CD8-positive, alpha-beta T cell (primary cell): ENCODE measurements at regions of chr11 and their contacts with region 1.

Region 1: GRCh38 chr11:72793425-72794367 is at the start of gene STARD10:
- DNase-seq: peak; percentile 88 to 97 (median 95)
- ATAC-seq: peak; percentile 92
- H3K4me3 ChIP-seq: peak within 1 kb of the TSS; percentile 62 to 90
- H3K4me3 Mint-ChIP-seq: peak within 1 kb of the TSS; percentile 99
- H3K27ac ChIP-seq: peak within 1 kb of the TSS; percentile 87 to 92
- H3K27ac Mint-ChIP-seq: peak within 1 kb of the TSS; percentile 100
- H3K4me1 ChIP-seq: peaks cover 20% of the 10 kb centered on the region
- H3K4me1 Mint-ChIP-seq: peaks cover 25% of the 10 kb centered on the region
- H3K27me3 ChIP-seq: no peaks in the 10 kb centered on the region
- H3K27me3 Mint-ChIP-seq: no peaks in the 10 kb centered on the region
- CTCF ChIP-seq: peak; percentile 91
- total RNA-seq, gene STARD10: 22.1 to 25.1 TPM

Region 2: GRCh38 chr11:72736452-72737069 is 57.1 kb before region 1 on chr11:
- CTCF ChIA-PET with region 1: interaction called, 16 read pairs
- POLR2A ChIA-PET with region 1: no interaction called
- intact Hi-C with region 1: no loop called
- DNase-seq: peak; percentile 50 to 95 (median 75)
- ATAC-seq: peak; percentile 89
- H3K4me3 ChIP-seq: no peak overlapping the region
- H3K4me3 Mint-ChIP-seq: peak overlapping the region; percentile 47
- H3K27ac ChIP-seq: peak overlapping the region; percentile 60 to 96
- H3K27ac Mint-ChIP-seq: peak overlapping the region; percentile 99
- H3K4me1 ChIP-seq: peaks cover 53% of the 10 kb centered on the region
- H3K4me1 Mint-ChIP-seq: peaks cover 56% of the 10 kb centered on the region
- H3K27me3 ChIP-seq: no peaks in the 10 kb centered on the region
- H3K27me3 Mint-ChIP-seq: no peaks in the 10 kb centered on the region
- CTCF ChIP-seq: no peak

Region 3: GRCh38 chr11:72781313-72782050 is 12.2 kb before region 1 on chr11:
- CTCF ChIA-PET with region 1: interaction called, 16 read pairs
- POLR2A ChIA-PET with region 1: interaction called, 15 read pairs
- intact Hi-C with region 1: loop called (anchors 1 kb)
- DNase-seq: peak; percentile 34 to 87 (median 66)
- ATAC-seq: peak; percentile 86
- H3K4me3 ChIP-seq: peak overlapping the region; percentile 42 to 59
- H3K4me3 Mint-ChIP-seq: peak overlapping the region; percentile 72
- H3K27ac ChIP-seq: no peak overlapping the region
- H3K27ac Mint-ChIP-seq: peak overlapping the region; percentile 50
- H3K4me1 ChIP-seq: peaks cover 16% of the 10 kb centered on the region
- H3K4me1 Mint-ChIP-seq: peaks cover 29% of the 10 kb centered on the region
- H3K27me3 ChIP-seq: no peaks in the 10 kb centered on the region
- H3K27me3 Mint-ChIP-seq: no peaks in the 10 kb centered on the region
- CTCF ChIP-seq: no peak

Region 4: GRCh38 chr11:72821883-72822799 is 28.4 kb after region 1 on chr11:
- CTCF ChIA-PET with region 1: interaction called, 4 read pairs
- POLR2A ChIA-PET with region 1: no interaction called
- intact Hi-C with region 1: loop called in 1 of 2 experiments (anchors 1 kb)
- DNase-seq: peak; percentile 59 to 96 (median 84)
- ATAC-seq: peak; percentile 94
- H3K4me3 ChIP-seq: peak overlapping the region in 1 of 2 experiments; percentile 45
- H3K4me3 Mint-ChIP-seq: peak overlapping the region; percentile 29
- H3K27ac ChIP-seq: peak overlapping the region in 1 of 2 experiments; percentile 61
- H3K27ac Mint-ChIP-seq: peak overlapping the region; percentile 80
- H3K4me1 ChIP-seq: peaks cover 6% of the 10 kb centered on the region
- H3K4me1 Mint-ChIP-seq: peaks cover 10% of the 10 kb centered on the region
- H3K27me3 ChIP-seq: no peaks in the 10 kb centered on the region
- H3K27me3 Mint-ChIP-seq: no peaks in the 10 kb centered on the region
- CTCF ChIP-seq: no peak

Region 5: GRCh38 chr11:73141848-73142286 is 348.2 kb after region 1 on chr11:
- CTCF ChIA-PET with region 1: interaction called, 3 read pairs
- POLR2A ChIA-PET with region 1: no interaction called
- intact Hi-C with region 1: loop called in 1 of 2 experiments (anchors 1 kb)
- DNase-seq: peak in 7 of 9 experiments; percentile 23 to 81 (median 66)
- ATAC-seq: peak; percentile 27
- H3K4me3 ChIP-seq: peak overlapping the region; percentile 97 to 99
- H3K4me3 Mint-ChIP-seq: peak overlapping the region; percentile 98
- H3K27ac ChIP-seq: peak overlapping the region; percentile 83 to 87
- H3K27ac Mint-ChIP-seq: peak overlapping the region; percentile 96
- H3K4me1 ChIP-seq: peaks cover 33% of the 10 kb centered on the region
- H3K4me1 Mint-ChIP-seq: peaks cover 52% of the 10 kb centered on the region
- H3K27me3 ChIP-seq: no peaks in the 10 kb centered on the region
- H3K27me3 Mint-ChIP-seq: no peaks in the 10 kb centered on the region
- CTCF ChIP-seq: no peak

Region 6: GRCh38 chr11:73965076-73965860 is 1171.6 kb after region 1 on chr11:
- CTCF ChIA-PET with region 1: no interaction called
- POLR2A ChIA-PET with region 1: no interaction called
- intact Hi-C with region 1: loop called in 1 of 2 experiments (anchors 10 kb)
- DNase-seq: peak in 2 of 9 experiments; percentile 8 to 14
- ATAC-seq: no peak
- H3K4me3 ChIP-seq: no peak overlapping the region
- H3K4me3 Mint-ChIP-seq: no peak overlapping the region
- H3K27ac ChIP-seq: no peak overlapping the region
- H3K27ac Mint-ChIP-seq: peak overlapping the region; percentile 78
- H3K4me1 ChIP-seq: peaks cover 51% of the 10 kb centered on the region
- H3K4me1 Mint-ChIP-seq: peaks cover 44% of the 10 kb centered on the region
- H3K27me3 ChIP-seq: no peaks in the 10 kb centered on the region
- H3K27me3 Mint-ChIP-seq: no peaks in the 10 kb centered on the region
- CTCF ChIP-seq: no peak